ENCODE measurements at regions of chr3 and their contacts with region 1.

Region 1: GRCh38 chr3:8678751-8679150 is 34.2 kb upstream of the SSUH2 start:
- DNase-seq: no peak
- ATAC-seq: no peak
- H3K4me3 ChIP-seq: no peak overlapping the region
- H3K27ac ChIP-seq: no peak overlapping the region
- H3K4me1 ChIP-seq: no peaks in the 10 kb centered on the region
- H3K27me3 ChIP-seq: no peaks in the 10 kb centered on the region

Region 2: GRCh38 chr3:8755563-8756237 is 76.9 kb after region 1 on chr3:
- intact Hi-C with region 1: loop called in 1 of 4 experiments (anchors 10 kb)
- DNase-seq: no peak
- ATAC-seq: no peak
- H3K4me3 ChIP-seq: no peak overlapping the region
- H3K27ac ChIP-seq: no peak overlapping the region
- H3K4me1 ChIP-seq: no peaks in the 10 kb centered on the region
- H3K27me3 ChIP-seq: no peaks in the 10 kb centered on the region